Activated CD8-positive, alpha-beta T cell treated with anti-CD3 and anti-CD28 coated beads, Interleukin-2, amount 10 ng/mL, durations not matched to agents 7 days and 5 days (primary cell): ENCODE measurements at regions of chr5 and their contacts with region 1.

Region 1: DNA sequence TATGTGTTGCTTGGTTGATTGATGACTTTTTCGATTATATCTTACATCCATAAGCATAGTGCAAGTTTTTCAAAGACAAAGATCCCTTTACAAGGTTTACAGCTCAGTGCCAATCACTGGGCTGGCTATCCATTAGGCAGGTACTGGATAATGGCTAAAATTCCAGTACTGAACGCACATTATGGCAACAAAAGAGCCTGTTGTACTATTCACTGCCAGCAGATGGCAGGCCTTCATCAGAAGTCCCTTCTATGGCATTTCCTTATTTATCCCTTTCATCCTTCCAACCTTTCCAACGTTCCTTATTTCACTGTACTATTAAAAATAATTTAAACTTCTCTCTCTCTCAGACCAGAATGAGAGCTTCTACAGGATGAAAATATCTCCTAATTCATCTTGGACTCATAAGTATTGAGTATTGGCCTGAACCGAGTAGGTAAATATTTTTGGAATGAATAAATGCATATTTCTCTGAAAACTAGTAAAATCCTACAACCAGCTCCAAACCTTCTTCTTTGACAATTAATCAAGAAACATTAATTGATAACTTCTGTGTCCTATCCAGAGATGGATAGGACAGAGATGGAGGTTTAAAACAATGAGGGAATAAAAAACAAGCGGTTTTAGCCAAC is 6.7 kb upstream of the WNT8A start:
- DNase-seq: peak; percentile 60
- ATAC-seq: no peak
- H3K4me3 Mint-ChIP-seq: no peak overlapping the region
- H3K27ac Mint-ChIP-seq: no peak overlapping the region
- H3K4me1 Mint-ChIP-seq: peaks cover 12% of the 10 kb centered on the region
- H3K27me3 Mint-ChIP-seq: no peaks in the 10 kb centered on the region

Region 2: GRCh38 chr5:137833463-137833862 is 243.7 kb before region 1 on chr5:
- CTCF ChIA-PET with region 1: no interaction called
- POLR2A ChIA-PET with region 1: no interaction called
- DNase-seq: no peak
- ATAC-seq: no peak
- H3K4me3 Mint-ChIP-seq: no peak overlapping the region
- H3K27ac Mint-ChIP-seq: no peak overlapping the region
- H3K4me1 Mint-ChIP-seq: no peaks in the 10 kb centered on the region
- H3K27me3 Mint-ChIP-seq: peaks cover 6% of the 10 kb centered on the region

Region 3: DNA sequence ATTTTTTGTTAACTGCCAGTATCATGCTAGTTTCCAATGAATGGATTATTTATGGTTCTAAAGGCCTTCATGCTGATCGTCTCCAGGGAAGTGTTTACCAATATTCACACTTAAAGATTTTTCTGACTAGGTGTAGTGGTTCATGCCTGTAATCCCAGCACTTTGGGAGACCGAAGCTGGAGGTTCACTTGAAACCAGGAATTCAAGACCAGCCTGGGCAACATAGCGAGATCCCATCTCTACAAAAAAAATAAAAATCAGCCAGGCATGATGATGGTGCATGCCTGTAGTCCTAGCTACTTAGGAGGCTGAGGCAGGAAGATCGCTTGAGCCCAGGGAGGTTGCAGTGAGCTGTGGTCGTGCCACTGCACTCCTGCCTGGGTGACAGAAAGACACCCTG is 87.8 kb before region 1 on chr5:
- CTCF ChIA-PET with region 1: no interaction called
- POLR2A ChIA-PET with region 1: no interaction called
- DNase-seq: no peak
- ATAC-seq: no peak
- H3K4me3 Mint-ChIP-seq: no peak overlapping the region
- H3K27ac Mint-ChIP-seq: no peak overlapping the region
- H3K4me1 Mint-ChIP-seq: no peaks in the 10 kb centered on the region
- H3K27me3 Mint-ChIP-seq: no peaks in the 10 kb centered on the region

Region 4: GRCh38 chr5:138093036-138093435 is 15.9 kb after region 1 on chr5:
- CTCF ChIA-PET with region 1: interaction called, 10 read pairs
- POLR2A ChIA-PET with region 1: no interaction called
- DNase-seq: no peak
- ATAC-seq: no peak
- H3K4me3 Mint-ChIP-seq: no peak overlapping the region
- H3K27ac Mint-ChIP-seq: no peak overlapping the region
- H3K4me1 Mint-ChIP-seq: peaks cover 26% of the 10 kb centered on the region
- H3K27me3 Mint-ChIP-seq: no peaks in the 10 kb centered on the region

Region 5: GRCh38 chr5:138128334-138128733 is 51.2 kb after region 1 on chr5:
- CTCF ChIA-PET with region 1: interaction called, 89 read pairs
- POLR2A ChIA-PET with region 1: no interaction called
- DNase-seq: no peak
- ATAC-seq: no peak
- H3K4me3 Mint-ChIP-seq: no peak overlapping the region
- H3K27ac Mint-ChIP-seq: no peak overlapping the region
- H3K4me1 Mint-ChIP-seq: no peaks in the 10 kb centered on the region
- H3K27me3 Mint-ChIP-seq: peaks cover 14% of the 10 kb centered on the region

Region 6: DNA sequence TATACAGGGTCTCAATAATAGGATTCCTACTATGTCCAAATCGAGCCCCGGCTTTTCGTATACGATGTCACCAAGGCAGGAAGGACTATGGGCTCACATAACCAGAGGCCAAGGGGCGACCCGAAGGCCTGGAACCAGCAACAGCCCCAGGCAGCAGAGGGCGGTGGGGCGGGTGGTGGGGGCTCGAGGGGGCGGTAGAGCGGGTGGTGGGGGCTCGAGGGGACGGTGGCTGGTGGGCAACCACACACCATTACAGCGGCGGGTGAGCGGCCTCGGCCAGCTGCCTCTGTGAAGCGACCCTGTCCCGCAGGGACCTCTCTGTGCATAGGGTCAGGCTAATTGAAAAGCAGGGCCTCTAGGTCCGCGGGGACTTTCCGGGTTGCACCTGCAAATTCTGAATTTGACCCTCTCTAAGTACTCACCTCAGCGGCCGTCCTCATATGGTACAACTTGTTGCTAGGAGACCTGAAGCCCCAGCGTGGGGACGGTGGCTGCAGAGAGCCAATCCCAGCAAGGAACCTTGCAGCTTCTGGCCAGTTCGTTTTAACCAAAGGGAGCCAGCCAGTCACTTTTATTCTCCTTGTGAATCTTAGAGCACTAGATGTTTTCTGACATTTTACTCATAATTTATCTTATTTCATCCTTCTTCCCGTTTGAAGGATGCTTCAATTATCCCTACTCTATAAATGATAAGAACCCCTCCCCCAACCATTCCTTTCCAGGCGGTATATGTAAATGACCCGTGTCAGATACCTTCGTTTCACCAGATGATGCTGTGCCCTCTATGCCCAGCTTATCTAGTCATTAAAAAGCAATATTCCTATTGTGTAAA is 62.0 kb after region 1 on chr5 and contains the start of gene NME5:
- CTCF ChIA-PET with region 1: interaction called, 89 read pairs
- POLR2A ChIA-PET with region 1: no interaction called
- DNase-seq: no peak
- ATAC-seq: no peak
- H3K4me3 Mint-ChIP-seq: no peak within 1 kb of the TSS
- H3K27ac Mint-ChIP-seq: no peak within 1 kb of the TSS
- H3K4me1 Mint-ChIP-seq: no peaks in the 10 kb centered on the region
- H3K27me3 Mint-ChIP-seq: peaks cover 23% of the 10 kb centered on the region
- total RNA-seq, gene NME5: not detected